ENCODE measurements at regions of chr9 and their contacts with region 1.

Region 1: DNA sequence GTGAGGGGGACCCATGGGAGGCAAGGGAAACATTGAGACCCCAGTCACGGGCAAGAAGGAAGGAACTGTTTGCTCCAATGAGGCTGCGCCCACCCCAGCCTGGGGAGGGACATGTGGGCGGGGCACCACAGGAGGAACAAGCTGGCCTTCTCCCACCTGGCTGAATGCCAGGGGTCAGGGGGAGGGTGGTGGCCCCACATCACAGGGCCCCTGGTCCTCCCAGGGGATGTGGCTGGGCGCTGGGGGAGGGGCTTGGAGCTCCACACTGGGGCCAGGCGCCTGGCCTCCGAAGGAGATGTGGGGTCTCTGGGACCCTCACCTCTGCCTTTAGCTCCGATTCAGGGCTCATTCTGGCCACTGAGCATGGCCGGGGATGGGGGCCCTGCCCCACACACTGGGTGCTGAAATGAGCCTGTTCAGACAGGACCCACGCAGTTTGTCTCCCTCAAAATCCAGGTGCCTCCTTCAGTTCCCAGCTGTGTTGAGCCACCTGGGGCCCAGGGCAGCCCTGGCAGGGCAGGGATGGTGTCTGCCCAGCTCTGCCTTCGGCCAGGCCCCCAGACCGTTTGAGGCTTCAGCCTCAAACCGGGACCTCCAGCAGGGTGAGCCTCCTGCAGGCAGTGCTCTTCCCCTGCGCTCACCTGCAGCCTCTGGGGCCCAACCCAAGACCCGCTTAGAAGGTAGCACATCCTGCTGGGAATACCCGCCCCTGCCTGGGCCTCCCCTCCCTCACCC is 33.2 kb upstream of the NOTCH1 start:
- DNase-seq: peak; percentile 32
- H3K4me3 ChIP-seq: no peak overlapping the region
- H3K27ac ChIP-seq: no peak overlapping the region
- H3K4me1 ChIP-seq: no peaks in the 10 kb centered on the region
- H3K27me3 ChIP-seq: no peaks in the 10 kb centered on the region
- CTCF ChIP-seq: no peak

Region 2: GRCh38 chr9:136820971-136821825 is 242.1 kb after region 1 on chr9:
- CTCF ChIA-PET with region 1: no interaction called
- POLR2A ChIA-PET with region 1: interaction called, 11 read pairs
- intact Hi-C with region 1: no loop called
- DNase-seq: peak; percentile 65
- H3K4me3 ChIP-seq: peak overlapping the region; percentile 38
- H3K27ac ChIP-seq: peak overlapping the region; percentile 77
- H3K4me1 ChIP-seq: peaks cover 7% of the 10 kb centered on the region
- H3K27me3 ChIP-seq: no peaks in the 10 kb centered on the region
- CTCF ChIP-seq: no peak